ENCODE measurements at regions of chr15 and their contacts with region 1.

Region 1: DNA sequence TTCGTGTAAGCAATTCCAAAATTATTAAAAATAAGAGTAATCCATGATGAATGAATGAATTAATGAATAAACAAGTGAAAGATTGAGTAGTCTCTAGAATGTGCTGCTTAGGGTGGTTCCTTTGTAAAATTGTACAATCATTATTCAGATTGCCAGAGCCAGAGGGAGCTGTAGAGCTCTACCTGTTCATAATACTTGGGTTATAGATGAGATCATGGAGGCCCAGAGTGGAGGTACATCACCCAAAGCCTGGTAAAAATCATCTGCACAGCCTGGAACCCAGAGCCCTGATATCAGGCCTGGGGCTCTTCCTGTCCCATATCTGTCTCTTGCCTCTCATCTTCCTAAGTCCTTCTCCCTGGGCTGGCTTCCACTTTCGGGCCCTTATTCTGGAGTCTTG is 297.2 kb downstream of the RPLP1 start:
- H3K4me3 ChIP-seq: no peak overlapping the region
- H3K27ac ChIP-seq: no peak overlapping the region
- H3K4me1 ChIP-seq: no peaks in the 10 kb centered on the region; the same call in 1 of the 2 replicates
- CTCF ChIP-seq: no peak

Region 2: DNA sequence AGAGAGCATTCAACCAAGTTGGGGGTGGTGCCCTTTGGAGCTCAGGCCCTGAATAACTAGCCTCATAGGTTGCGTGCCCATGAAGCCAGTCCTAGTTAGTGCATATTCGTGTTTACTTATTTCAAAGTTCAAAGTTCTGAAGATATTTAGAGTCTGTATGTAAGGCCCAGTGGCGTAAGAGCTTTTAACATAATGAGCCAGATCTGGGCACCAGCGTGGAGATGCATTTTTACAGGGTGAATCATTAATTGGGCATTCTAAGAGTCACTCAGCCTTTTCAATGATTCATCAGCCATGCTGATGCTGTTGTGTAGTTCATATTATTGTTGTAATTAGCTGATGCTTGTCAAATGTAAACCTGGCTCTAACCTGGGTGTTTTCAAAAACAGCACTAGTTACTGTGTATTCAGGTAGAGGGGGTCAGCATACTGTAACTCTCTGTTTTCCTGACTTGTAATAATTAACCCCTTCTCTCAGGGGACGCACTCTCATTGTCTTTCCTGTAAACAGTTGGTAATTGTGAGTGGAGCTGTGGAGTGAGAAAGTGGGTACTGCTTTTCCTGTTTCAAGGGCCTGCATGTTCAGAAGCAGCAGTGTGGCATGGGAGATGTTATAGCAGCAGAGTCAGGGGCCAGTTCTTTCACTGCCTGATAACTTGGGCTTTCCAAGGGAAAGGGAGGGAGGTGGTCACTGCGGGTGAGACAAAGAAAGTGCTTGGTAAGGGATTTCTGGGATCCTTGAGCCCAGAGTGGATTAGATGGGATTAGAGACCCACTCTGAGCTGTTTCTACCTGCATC is 192.3 kb before region 1 on chr15:
- CTCF ChIA-PET with region 1: no interaction called
- POLR2A ChIA-PET with region 1: no interaction called
- H3K4me3 ChIP-seq: no peak overlapping the region
- H3K27ac ChIP-seq: no peak overlapping the region
- H3K4me1 ChIP-seq: peaks cover 9% of the 10 kb centered on the region
- CTCF ChIP-seq: no peak

Region 3: GRCh38 chr15:69760890-69761568 is 11.2 kb after region 1 on chr15:
- CTCF ChIA-PET with region 1: interaction called, 16 read pairs
- POLR2A ChIA-PET with region 1: no interaction called
- H3K4me3 ChIP-seq: no peak overlapping the region
- H3K27ac ChIP-seq: no peak overlapping the region
- H3K4me1 ChIP-seq: peaks cover 11% of the 10 kb centered on the region
- CTCF ChIP-seq: no peak